ENCODE measurements at regions of chr9 and their contacts with region 1.

Region 1: DNA sequence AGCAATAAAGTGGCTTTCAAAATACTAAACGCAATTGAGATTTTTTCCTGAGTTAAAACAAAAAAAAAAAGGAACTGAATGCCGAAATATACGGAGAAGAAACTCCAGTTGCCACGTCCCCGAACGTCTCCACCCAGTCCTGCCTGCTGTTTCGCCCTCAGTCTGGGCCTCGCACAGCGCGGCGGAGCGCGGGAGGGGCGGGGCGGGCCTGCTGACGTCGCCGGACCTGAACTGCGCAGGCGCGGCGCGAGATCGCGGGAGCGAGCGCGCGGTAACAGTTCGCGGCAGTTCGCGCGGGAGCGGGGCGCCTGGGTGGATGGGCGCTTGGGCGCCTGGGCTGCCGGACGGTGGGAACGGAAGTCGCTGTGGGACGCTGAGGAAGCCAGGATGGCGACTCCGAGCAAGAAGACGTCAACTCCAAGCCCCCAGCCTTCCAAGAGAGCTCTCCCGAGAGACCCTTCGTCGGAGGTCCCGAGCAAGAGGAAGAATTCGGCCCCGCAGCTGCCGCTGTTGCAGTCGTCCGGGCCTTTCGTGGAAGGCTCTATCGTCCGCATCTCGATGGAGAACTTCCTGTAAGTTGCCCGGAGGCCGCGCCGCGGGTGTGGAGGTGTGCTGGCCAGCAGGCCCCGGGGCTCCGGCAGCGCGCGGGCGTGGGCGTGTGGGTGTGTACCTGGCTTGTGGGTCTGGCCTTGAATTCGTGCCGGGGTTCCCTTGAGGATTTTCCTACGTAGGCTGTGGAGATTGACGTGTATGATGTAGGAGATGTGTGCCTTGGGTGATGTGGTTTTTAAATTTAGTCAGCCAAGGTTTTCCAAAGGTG is at the start of gene SMC5:
- DNase-seq: peak; percentile 92
- ATAC-seq: peak; percentile 83
- H3K4me3 Mint-ChIP-seq: peak within 1 kb of the TSS; percentile 89
- H3K27ac Mint-ChIP-seq: peak within 1 kb of the TSS; percentile 96
- H3K4me1 Mint-ChIP-seq: peaks cover 54% of the 10 kb centered on the region
- H3K27me3 Mint-ChIP-seq: no peaks in the 10 kb centered on the region
- total RNA-seq, gene SMC5: 39.0 to 43.0 TPM

Region 2: GRCh38 chr9:69672596-69673310 is 586.1 kb before region 1 on chr9:
- CTCF ChIA-PET with region 1: no interaction called
- POLR2A ChIA-PET with region 1: no interaction called
- intact Hi-C with region 1: loop called in 1 of 2 experiments (anchors 5 kb)
- DNase-seq: peak; percentile 87
- ATAC-seq: peak; percentile 91
- H3K4me3 Mint-ChIP-seq: peak overlapping the region; percentile 67
- H3K27ac Mint-ChIP-seq: no peak overlapping the region
- H3K4me1 Mint-ChIP-seq: no peaks in the 10 kb centered on the region
- H3K27me3 Mint-ChIP-seq: peaks cover 19% of the 10 kb centered on the region

Region 3: DNA sequence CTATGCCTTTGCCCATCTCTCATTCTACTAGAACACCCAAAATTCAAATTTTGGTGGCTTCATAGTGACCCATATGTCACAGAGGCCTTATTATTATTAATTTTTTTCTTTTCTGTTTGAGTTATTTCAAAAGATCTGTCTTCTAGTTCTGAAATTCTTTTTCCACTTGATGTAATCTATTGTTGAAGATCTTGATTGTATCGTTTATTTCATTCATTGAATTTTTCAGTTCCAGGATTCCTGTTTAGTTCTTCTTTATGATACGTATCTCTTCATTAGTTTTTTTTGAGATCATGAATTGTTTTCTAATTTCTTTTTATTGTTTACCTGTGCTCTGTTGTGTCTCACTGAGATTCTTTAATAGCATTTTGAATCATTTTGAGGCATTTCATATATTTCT is 562.1 kb before region 1 on chr9:
- CTCF ChIA-PET with region 1: no interaction called
- POLR2A ChIA-PET with region 1: no interaction called
- intact Hi-C with region 1: no loop called
- DNase-seq: no peak
- ATAC-seq: no peak
- H3K4me3 Mint-ChIP-seq: no peak overlapping the region
- H3K27ac Mint-ChIP-seq: no peak overlapping the region
- H3K4me1 Mint-ChIP-seq: no peaks in the 10 kb centered on the region
- H3K27me3 Mint-ChIP-seq: peaks cover 5% of the 10 kb centered on the region

Region 4: DNA sequence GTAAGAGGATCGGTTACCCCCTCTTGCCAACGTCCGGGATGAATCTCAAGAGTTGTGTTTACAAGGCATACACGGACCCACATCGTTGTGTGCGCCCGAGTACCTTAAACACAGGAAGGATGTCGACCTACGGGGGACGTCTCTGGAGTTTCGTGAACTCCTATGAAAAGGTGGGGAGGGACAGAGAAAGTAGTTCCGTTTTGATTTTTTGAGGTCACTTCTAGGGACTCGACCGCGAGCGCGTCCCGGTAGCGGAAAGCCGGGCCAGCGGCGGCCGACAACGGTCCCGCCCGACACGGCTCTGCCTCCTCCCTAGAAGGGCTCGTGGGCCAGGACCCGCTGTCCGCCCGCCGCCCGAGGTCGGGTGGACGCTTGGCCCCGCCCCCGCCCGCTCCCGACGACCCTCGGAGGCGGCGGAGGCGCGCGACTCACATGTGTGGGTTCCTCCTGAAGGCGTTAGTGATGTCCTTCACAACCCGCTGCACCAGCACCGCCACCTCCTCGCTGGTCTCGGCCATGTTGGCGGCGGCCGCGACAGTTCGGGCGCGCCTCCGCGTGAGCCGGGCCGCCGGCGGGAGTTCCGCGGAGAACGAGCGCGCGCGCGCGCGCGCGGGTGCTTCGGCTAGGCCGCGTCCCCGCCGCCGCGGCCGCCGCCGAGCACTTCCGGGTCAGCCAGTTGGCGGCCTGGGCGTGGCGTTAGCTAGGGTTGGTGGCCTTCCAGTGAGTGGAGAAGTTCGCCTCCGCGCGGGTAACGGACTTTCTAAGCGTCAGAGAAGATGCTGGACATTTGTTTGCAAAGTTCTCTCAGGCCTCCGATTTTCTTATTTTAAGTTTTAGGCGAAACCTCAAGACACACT is 499.3 kb before region 1 on chr9 and contains the start of gene PTAR1:
- CTCF ChIA-PET with region 1: no interaction called
- POLR2A ChIA-PET with region 1: no interaction called
- intact Hi-C with region 1: loop called in 1 of 2 experiments (anchors 1 kb)
- DNase-seq: peak; percentile 95
- ATAC-seq: peak; percentile 87
- H3K4me3 Mint-ChIP-seq: peak within 1 kb of the TSS; percentile 94
- H3K27ac Mint-ChIP-seq: peak within 1 kb of the TSS; percentile 94
- H3K4me1 Mint-ChIP-seq: peaks cover 27% of the 10 kb centered on the region
- H3K27me3 Mint-ChIP-seq: no peaks in the 10 kb centered on the region
- total RNA-seq, gene PTAR1: 35.2 to 37.1 TPM

Region 5: DNA sequence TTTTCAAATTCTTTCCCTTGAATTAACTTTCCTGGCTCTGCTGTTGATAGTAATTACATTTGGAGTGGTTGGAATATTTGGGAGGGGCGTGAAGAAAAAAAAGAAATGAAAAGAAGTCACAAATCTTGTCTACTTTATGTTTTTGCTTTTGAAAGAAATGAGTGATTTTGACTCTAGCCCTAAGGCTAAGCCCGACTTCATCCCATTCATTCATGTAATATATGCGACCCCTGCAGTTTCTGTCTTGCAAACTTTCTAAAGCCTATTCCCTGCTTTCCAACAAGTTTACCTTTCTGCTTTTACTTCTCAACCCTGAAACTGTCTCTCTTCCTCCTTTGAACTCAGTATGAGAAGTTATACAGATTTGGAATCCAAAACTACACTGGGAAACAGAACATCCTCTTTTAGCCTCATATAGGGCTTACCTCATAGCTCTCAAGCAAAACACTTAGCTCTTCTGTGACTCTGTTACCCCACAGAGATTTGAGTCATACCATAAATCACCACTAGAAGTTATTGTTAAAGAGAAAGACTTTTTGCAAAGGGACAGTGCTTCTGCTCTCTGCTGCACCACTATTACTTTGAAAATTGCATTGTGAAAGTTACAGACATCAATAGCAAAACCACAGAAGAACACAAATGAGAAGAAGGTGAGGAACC is 436.7 kb before region 1 on chr9:
- CTCF ChIA-PET with region 1: no interaction called
- POLR2A ChIA-PET with region 1: no interaction called
- intact Hi-C with region 1: loop called in 1 of 2 experiments (anchors 10 kb)
- DNase-seq: no peak
- ATAC-seq: peak; percentile 82
- H3K4me3 Mint-ChIP-seq: no peak overlapping the region
- H3K27ac Mint-ChIP-seq: no peak overlapping the region
- H3K4me1 Mint-ChIP-seq: peaks cover 26% of the 10 kb centered on the region
- H3K27me3 Mint-ChIP-seq: peaks cover 26% of the 10 kb centered on the region

Region 6: DNA sequence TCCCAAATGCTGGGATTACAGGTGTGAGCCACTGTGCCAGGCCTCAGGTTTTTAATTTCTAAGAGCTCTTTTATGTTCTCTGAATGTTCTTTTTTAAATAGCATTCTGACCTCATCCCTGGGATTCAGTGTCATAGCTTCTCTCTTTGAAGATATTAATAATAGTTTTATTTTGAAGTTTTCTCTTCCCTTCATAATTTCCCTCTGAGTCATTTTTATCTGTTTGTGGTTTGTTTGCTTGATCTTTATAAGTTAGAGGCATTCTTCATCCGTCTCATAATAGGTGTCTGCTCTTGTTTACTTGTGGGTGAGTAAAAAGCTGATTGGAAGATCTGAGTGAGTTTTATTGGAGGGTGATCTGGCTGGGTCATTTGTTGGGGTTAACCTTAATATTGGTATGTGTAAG is 227.8 kb before region 1 on chr9:
- CTCF ChIA-PET with region 1: no interaction called
- POLR2A ChIA-PET with region 1: no interaction called
- intact Hi-C with region 1: no loop called
- DNase-seq: no peak
- ATAC-seq: no peak
- H3K4me3 Mint-ChIP-seq: no peak overlapping the region
- H3K27ac Mint-ChIP-seq: no peak overlapping the region
- H3K4me1 Mint-ChIP-seq: no peaks in the 10 kb centered on the region
- H3K27me3 Mint-ChIP-seq: peaks cover 6% of the 10 kb centered on the region

Region 7: DNA sequence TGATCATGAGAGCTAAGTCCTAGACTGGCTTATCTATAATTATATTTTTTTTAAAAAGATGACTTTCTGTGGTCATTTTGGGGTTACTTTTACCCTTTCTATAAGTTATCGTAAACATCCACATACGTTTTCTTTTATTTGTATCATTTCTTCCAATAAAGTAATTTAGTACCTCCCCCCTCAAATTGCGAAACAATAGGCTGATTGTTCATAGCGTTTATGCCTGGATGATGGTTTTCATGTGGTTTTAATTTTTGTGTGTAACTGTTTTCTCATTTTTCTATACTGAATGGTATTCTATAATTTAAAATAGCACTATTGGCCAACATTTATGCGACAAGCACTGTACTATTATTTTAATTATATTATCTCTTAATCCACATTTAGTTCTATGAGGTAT is 44.4 kb after region 1 on chr9:
- CTCF ChIA-PET with region 1: no interaction called
- POLR2A ChIA-PET with region 1: no interaction called
- intact Hi-C with region 1: loop called in 1 of 2 experiments (anchors 5 kb)
- DNase-seq: no peak
- ATAC-seq: no peak
- H3K4me3 Mint-ChIP-seq: no peak overlapping the region
- H3K27ac Mint-ChIP-seq: no peak overlapping the region
- H3K4me1 Mint-ChIP-seq: peaks cover 2% of the 10 kb centered on the region
- H3K27me3 Mint-ChIP-seq: no peaks in the 10 kb centered on the region

Region 8: GRCh38 chr9:70466976-70467561 is 208.2 kb after region 1 on chr9:
- CTCF ChIA-PET with region 1: no interaction called
- POLR2A ChIA-PET with region 1: no interaction called
- intact Hi-C with region 1: loop called in 1 of 2 experiments (anchors 5 kb)
- DNase-seq: peak; percentile 71
- ATAC-seq: peak; percentile 92
- H3K4me3 Mint-ChIP-seq: no peak overlapping the region
- H3K27ac Mint-ChIP-seq: peak overlapping the region; percentile 51
- H3K4me1 Mint-ChIP-seq: peaks cover 55% of the 10 kb centered on the region
- H3K27me3 Mint-ChIP-seq: no peaks in the 10 kb centered on the region

Measured in activated CD4-positive, alpha-beta T cell treated with anti-CD3 and anti-CD28 coated beads for 36 hours (primary cell).